ENCODE measurements at regions of chr1 and their contacts with region 1.

Region 1: DNA sequence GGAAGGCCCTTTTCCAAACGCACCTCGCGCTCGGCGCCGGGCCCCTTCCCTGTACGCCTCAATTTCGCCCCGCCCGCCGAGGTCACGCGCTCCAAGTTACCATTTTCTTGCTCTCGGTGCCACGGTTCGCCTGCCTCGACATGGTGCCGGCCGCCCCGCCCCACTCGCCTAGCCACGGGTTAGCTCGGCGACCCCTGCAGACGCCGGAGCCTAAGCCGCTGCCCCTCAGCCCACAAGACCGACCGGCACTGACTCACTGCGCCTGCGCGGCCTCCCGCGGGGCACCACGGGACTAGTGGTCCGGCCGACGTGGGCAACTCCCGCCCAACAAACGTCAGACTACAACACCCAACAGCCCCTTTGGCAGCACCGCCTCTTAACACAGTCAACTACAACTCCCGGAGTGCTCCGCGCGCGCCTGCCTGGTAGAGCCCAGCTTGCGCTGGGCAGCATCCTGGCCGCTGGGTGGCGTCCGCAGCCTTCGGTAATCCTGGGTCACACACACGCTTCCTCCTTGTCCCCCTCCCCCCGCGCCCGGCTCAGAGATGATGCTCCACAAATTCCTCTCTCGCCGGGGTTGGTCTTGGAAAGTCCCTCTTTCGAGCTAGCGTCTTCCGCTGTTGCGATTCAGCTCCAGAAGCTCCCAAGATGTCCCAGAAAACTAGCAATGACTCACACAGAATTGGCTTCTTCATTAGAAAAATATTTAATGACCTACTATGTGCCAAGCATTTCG is at the start of gene TRAPPC3:
- DNase-seq: peak; percentile 96
- ATAC-seq: peak; percentile 90
- H3K4me3 ChIP-seq: peak within 1 kb of the TSS; percentile 86
- H3K27ac ChIP-seq: peak within 1 kb of the TSS; percentile 77
- H3K4me1 ChIP-seq: peaks cover 30% of the 10 kb centered on the region
- H3K27me3 ChIP-seq: no peaks in the 10 kb centered on the region
- CTCF ChIP-seq: peak; percentile 94 to 100 (median 99); a peak in 5 of 6 replicates
- EP300 ChIP-seq: peak in 1 of 2 experiments; percentile 73; a peak in 1 of 4 replicates
- POLR2A ChIP-seq: peak; percentile 92
- RAD21 ChIP-seq: peak; percentile 93
- polyA plus RNA-seq, gene TRAPPC3: 14.7 to 24.5 TPM

Region 2: DNA sequence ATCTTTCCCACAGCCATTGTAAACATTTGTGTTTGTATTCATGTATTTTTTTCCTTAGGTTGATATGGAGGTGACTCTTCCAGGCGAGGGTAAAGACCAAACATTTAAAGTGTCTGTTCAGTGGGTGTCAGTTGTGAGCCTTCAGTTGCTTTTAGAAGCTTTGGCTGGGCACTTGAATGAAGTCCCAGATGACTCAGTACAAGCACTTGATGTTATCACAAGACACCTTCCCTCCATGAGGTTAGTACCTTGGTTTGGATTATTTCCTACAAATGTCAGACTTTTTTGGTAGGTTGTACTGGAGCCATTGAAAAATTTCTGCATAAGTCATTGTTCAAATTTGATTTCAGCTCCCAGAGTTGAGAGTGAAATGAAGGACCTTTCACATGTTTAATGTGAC is 324.1 kb before region 1 on chr1:
- CTCF ChIA-PET with region 1: no interaction called
- POLR2A ChIA-PET with region 1: no interaction called
- RAD21 ChIA-PET with region 1: no interaction called
- SMC1A ChIA-PET with region 1: no interaction called
- in situ Hi-C with region 1: no loop called
- intact Hi-C with region 1: no loop called
- DNase-seq: no peak
- ATAC-seq: no peak
- H3K4me3 ChIP-seq: no peak overlapping the region
- H3K27ac ChIP-seq: no peak overlapping the region
- H3K4me1 ChIP-seq: no peaks in the 10 kb centered on the region
- H3K27me3 ChIP-seq: no peaks in the 10 kb centered on the region
- CTCF ChIP-seq: no peak
- EP300 ChIP-seq: no peak
- POLR2A ChIP-seq: no peak
- RAD21 ChIP-seq: no peak

Region 3: DNA sequence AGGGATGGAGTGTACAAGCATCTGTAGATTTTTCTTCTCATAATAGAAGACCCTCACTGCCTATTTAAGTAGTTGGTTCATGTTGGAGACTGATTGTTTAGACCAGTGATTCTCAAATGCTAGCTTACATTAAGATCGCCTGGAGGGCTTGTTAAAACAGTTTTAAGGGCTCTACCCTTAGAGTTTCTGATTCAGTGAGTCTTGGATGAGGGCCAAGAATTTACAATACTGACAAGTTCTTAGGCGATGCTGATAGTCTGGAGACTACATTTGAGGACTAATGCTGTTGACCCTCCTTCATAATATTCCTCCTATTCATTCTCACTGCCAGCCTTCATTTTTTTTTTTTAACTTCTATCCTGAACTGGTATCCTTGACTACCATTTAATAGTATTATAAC is 233.7 kb before region 1 on chr1:
- CTCF ChIA-PET with region 1: no interaction called
- POLR2A ChIA-PET with region 1: no interaction called
- RAD21 ChIA-PET with region 1: no interaction called
- SMC1A ChIA-PET with region 1: no interaction called
- in situ Hi-C with region 1: no loop called
- intact Hi-C with region 1: no loop called
- DNase-seq: no peak
- ATAC-seq: no peak
- H3K4me3 ChIP-seq: no peak overlapping the region
- H3K27ac ChIP-seq: no peak overlapping the region
- H3K4me1 ChIP-seq: no peaks in the 10 kb centered on the region
- H3K27me3 ChIP-seq: no peaks in the 10 kb centered on the region
- CTCF ChIP-seq: no peak
- EP300 ChIP-seq: no peak
- POLR2A ChIP-seq: no peak
- RAD21 ChIP-seq: no peak

Region 4: GRCh38 chr1:35947547-35947946 is 201.9 kb before region 1 on chr1:
- CTCF ChIA-PET with region 1: no interaction called
- POLR2A ChIA-PET with region 1: no interaction called
- RAD21 ChIA-PET with region 1: no interaction called
- SMC1A ChIA-PET with region 1: no interaction called
- in situ Hi-C with region 1: no loop called
- intact Hi-C with region 1: no loop called
- DNase-seq: no peak
- ATAC-seq: no peak
- H3K4me3 ChIP-seq: no peak overlapping the region
- H3K27ac ChIP-seq: no peak overlapping the region
- H3K4me1 ChIP-seq: 0 out of 2 replicates have a peak, but pooled peaks cover 3% of the 10 kb centered on the region
- H3K27me3 ChIP-seq: no peaks in the 10 kb centered on the region
- CTCF ChIP-seq: no peak
- EP300 ChIP-seq: no peak
- POLR2A ChIP-seq: no peak
- RAD21 ChIP-seq: no peak

Region 5: GRCh38 chr1:36081926-36082485 is 67.4 kb before region 1 on chr1:
- CTCF ChIA-PET with region 1: no interaction called
- POLR2A ChIA-PET with region 1: no interaction called
- RAD21 ChIA-PET with region 1: no interaction called
- SMC1A ChIA-PET with region 1: no interaction called
- in situ Hi-C with region 1: no loop called
- intact Hi-C with region 1: no loop called
- DNase-seq: no peak
- ATAC-seq: no peak
- H3K4me3 ChIP-seq: no peak overlapping the region
- H3K27ac ChIP-seq: no peak overlapping the region
- H3K4me1 ChIP-seq: no peaks in the 10 kb centered on the region
- H3K27me3 ChIP-seq: no peaks in the 10 kb centered on the region; a peak in 1 of 4 replicates
- CTCF ChIP-seq: no peak
- EP300 ChIP-seq: no peak
- POLR2A ChIP-seq: no peak
- RAD21 ChIP-seq: no peak

Region 6: DNA sequence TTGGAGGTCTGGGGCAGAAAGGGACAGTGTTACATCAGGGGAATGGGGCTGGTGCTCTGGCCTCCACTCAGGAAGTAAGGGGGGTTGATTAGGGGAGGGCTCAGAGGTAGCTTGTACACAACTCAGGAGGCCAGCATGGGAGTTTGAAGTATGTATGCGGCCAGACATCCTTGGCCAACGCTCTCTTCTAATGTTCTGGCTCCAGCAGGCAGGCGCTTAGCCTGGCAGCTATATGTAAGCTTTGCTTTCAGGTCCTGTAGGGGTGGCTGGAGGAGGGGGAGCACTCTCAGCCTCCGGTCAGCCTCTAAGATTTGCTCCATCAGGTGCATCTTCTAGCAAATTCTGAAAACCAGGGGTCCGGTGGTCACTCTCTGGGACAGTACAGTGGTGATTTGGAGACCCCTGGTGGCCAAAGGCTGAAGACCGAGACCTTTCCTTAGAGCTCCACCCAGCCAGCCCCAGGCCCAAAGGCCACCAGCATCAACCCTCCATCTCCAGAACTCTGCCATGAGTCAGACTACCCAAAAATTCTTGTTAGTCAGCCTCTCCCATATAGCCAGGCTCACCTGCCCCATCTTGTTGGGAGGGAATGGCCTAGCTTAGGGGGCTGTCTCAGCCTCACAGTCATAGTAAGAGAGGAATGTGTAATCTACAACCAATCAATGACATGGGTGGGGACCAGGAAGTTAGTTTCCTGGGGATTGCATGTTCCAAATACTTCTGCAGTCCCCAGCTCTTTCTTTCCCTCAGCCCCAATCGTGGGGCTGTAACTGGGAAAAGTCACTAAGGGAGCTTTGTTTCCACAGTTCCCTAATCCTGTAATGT is 14.7 kb before region 1 on chr1:
- CTCF ChIA-PET with region 1: interaction called, 18 read pairs
- POLR2A ChIA-PET with region 1: interaction called, 8 read pairs
- RAD21 ChIA-PET with region 1: interaction called, 4 read pairs
- SMC1A ChIA-PET with region 1: interaction called, 6 read pairs
- in situ Hi-C with region 1: no loop called
- intact Hi-C with region 1: no loop called
- DNase-seq: no peak
- ATAC-seq: peak; percentile 96
- H3K4me3 ChIP-seq: no peak overlapping the region
- H3K27ac ChIP-seq: no peak overlapping the region
- H3K4me1 ChIP-seq: no peaks in the 10 kb centered on the region
- H3K27me3 ChIP-seq: no peaks in the 10 kb centered on the region
- CTCF ChIP-seq: peak; percentile 62 to 70 (median 69)
- EP300 ChIP-seq: no peak
- POLR2A ChIP-seq: no peak
- RAD21 ChIP-seq: peak; percentile 73

Region 7: GRCh38 chr1:36199934-36200741 is 50.7 kb after region 1 on chr1:
- CTCF ChIA-PET with region 1: interaction called, 15 read pairs
- POLR2A ChIA-PET with region 1: interaction called, 3 read pairs
- RAD21 ChIA-PET with region 1: interaction called, 3 read pairs
- SMC1A ChIA-PET with region 1: no interaction called
- in situ Hi-C with region 1: no loop called
- intact Hi-C with region 1: no loop called
- DNase-seq: no peak
- ATAC-seq: no peak
- H3K4me3 ChIP-seq: no peak overlapping the region
- H3K27ac ChIP-seq: no peak overlapping the region
- H3K4me1 ChIP-seq: 0 out of 2 replicates have a peak, but pooled peaks cover 3% of the 10 kb centered on the region
- H3K27me3 ChIP-seq: no peaks in the 10 kb centered on the region; a peak in 1 of 4 replicates
- CTCF ChIP-seq: no peak
- EP300 ChIP-seq: no peak
- POLR2A ChIP-seq: no peak
- RAD21 ChIP-seq: no peak

Region 8: DNA sequence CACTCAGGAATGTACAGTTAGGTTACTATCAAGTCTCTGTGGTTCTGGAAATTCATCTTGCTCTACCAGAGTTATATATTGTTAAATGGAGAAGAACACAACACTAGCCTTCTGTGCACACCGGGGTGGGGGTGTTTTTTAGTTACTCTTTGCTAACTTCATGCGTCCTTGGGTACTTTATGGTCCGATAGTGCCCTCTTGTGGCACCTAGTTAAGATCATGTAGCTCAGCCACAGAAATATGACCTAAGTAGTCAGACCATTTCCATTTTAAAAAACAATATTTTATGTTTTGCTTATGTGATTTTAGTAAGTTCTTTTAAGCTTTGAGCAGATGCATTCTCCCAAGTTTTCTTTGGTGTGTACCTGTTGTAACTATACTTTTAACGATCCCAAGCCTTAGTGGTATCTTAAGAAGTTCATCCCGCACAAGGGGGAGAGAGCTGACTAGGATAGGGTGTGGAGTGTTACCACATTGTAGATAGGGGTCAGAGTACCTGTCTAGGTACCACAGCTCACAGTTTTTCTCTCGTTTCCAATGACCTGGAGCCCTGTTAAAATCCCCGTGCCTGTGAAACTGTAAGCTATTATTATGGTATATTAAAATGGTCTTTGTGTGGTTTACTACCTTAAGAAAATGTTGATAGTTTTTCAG is 136.2 kb after region 1 on chr1:
- CTCF ChIA-PET with region 1: interaction called, 89 read pairs
- POLR2A ChIA-PET with region 1: interaction called, 8 read pairs
- RAD21 ChIA-PET with region 1: interaction called, 62 read pairs
- SMC1A ChIA-PET with region 1: interaction called, 69 read pairs
- in situ Hi-C with region 1: loop called (anchors 5 kb)
- intact Hi-C with region 1: loop called (anchors 1 kb)
- DNase-seq: peak; percentile 41
- ATAC-seq: peak; percentile 96
- H3K4me3 ChIP-seq: no peak overlapping the region
- H3K27ac ChIP-seq: no peak overlapping the region
- H3K4me1 ChIP-seq: no peaks in the 10 kb centered on the region; the same call in 1 of the 2 replicates
- H3K27me3 ChIP-seq: no peaks in the 10 kb centered on the region
- CTCF ChIP-seq: peak; percentile 56 to 78 (median 67)
- EP300 ChIP-seq: no peak
- POLR2A ChIP-seq: no peak
- RAD21 ChIP-seq: peak; percentile 84

Region 9: GRCh38 chr1:36369061-36369861 is 219.9 kb after region 1 on chr1:
- CTCF ChIA-PET with region 1: interaction called, 26 read pairs
- POLR2A ChIA-PET with region 1: interaction called, 7 read pairs
- RAD21 ChIA-PET with region 1: interaction called, 5 read pairs
- SMC1A ChIA-PET with region 1: interaction called, 5 read pairs
- in situ Hi-C with region 1: no loop called
- intact Hi-C with region 1: no loop called
- DNase-seq: no peak
- ATAC-seq: peak; percentile 58
- H3K4me3 ChIP-seq: no peak overlapping the region
- H3K27ac ChIP-seq: no peak overlapping the region
- H3K4me1 ChIP-seq: peaks cover 55% of the 10 kb centered on the region
- H3K27me3 ChIP-seq: no peaks in the 10 kb centered on the region
- CTCF ChIP-seq: peak; percentile 86 to 92 (median 90)
- EP300 ChIP-seq: no peak
- POLR2A ChIP-seq: no peak
- RAD21 ChIP-seq: peak; percentile 73